ENCODE measurements at regions of chr6 and their contacts with region 1.

Region 1: DNA sequence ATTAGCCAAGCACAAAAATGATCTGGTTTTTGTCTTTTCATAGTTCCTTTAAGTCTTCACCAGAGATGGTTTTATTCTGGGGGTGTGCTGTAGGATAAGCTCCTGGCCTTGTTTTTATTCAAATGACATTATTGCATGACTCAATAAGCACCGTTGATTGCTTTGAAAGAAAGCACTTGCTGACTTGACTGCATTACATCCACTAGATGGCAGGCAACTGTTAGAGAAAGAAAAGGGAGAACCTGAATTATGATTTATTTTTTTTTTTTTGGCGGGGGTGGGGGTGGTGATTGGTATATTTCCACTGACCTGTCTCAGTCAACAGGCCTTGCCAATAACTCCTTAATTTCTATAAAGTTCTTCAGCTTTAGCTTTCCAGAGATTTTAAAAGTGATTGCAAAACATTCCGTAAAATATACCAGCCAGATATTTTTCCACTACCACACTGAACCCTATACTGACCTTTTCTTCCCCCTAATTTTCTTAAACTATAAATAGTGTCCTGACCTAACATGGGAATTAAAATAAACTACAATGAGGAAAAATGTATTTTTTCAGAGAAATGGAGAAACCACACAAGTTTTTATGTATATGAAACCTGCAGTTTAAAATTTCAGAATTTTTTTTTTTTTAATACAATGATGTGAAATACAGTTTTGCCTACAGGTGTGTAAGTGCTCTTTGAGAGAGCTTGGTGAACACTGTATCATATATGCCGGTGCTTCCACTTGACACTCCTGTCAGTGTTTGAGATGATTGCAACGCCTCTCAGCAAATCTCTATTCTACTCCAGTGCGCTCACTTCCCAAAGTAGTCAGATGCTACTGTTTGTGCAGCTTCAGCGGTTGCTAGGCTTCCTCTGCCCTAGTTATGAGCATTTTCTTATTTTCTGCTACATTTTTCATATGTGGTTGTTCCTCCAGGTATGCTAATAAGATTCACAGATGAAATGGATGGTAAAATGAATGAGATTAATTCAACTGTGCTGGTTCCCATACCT is 274.3 kb downstream of the CD109 start:
- DNase-seq: peak in 1 of 2 donors; percentile 28
- ATAC-seq: peak in 5 of 8 donors; percentile 35 to 53 (median 37)
- H3K4me3 ChIP-seq: no peak overlapping the region
- H3K27ac ChIP-seq: no peak overlapping the region
- H3K4me1 ChIP-seq: peaks cover 0 to 21% (median 0%) of the 10 kb centered on the region in 9 donors
- H3K27me3 ChIP-seq: no peaks in the 10 kb centered on the region
- CTCF ChIP-seq: peak in 8 of 9 donors; percentile 35 to 68 (median 56)

Region 2: DNA sequence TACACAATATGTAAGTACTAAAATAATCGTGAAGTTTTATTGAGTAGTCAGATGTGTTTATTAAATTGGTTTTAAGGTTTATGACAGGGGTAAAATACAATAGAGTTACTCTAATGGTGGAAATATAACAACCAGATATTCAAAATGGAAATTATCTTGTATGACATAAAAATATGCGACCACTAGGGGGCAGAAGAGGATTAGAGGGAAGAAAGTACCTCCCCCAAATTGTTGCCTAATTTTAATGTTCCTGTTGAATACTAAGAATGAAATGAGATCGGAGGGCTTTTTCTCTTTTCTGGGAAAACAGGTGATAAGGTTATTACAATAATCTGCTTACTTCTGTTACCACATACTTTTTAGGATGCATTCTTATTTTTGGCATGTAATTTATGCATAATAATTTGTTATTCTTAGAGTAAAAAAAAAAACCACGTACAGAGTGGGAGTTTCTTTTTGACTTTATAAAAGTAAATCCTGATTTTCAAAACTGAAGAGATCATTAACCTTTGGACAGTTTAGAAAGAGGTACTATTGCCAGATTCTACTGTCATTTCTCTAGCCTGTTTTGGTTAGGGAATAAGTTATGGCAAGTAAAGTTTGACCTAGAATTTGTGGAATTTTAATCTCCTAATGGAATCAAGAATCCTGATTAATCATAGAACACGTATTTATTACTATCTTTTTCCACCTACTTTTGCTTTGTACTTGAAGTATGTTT is 115.1 kb before region 1 on chr6:
- intact Hi-C with region 1: loop called in 2 of 10 experiments (anchors 10 kb)
- DNase-seq: peak in 1 of 2 donors; percentile 42
- ATAC-seq: peak in 4 of 8 donors; percentile 23 to 64 (median 36)
- H3K4me3 ChIP-seq: no peak overlapping the region
- H3K27ac ChIP-seq: peak overlapping the region in 5 of 10 donors; percentile 8 to 54 (median 45)
- H3K4me1 ChIP-seq: peaks cover 0 to 4% (median 0%) of the 10 kb centered on the region in 9 donors
- H3K27me3 ChIP-seq: no peaks in the 10 kb centered on the region
- CTCF ChIP-seq: peak; percentile 57 to 77 (median 75)

Region 3: GRCh38 chr6:73898624-73899023 is 71.6 kb before region 1 on chr6:
- intact Hi-C with region 1: no loop called
- DNase-seq: no peak
- ATAC-seq: no peak
- H3K4me3 ChIP-seq: no peak overlapping the region
- H3K27ac ChIP-seq: no peak overlapping the region
- H3K4me1 ChIP-seq: no peaks in the 10 kb centered on the region
- H3K27me3 ChIP-seq: no peaks in the 10 kb centered on the region
- CTCF ChIP-seq: no peak

Region 4: GRCh38 chr6:74598473-74599393 is 628.5 kb after region 1 on chr6:
- intact Hi-C with region 1: no loop called
- DNase-seq: no peak
- ATAC-seq: no peak
- H3K4me3 ChIP-seq: no peak overlapping the region
- H3K27ac ChIP-seq: no peak overlapping the region
- H3K4me1 ChIP-seq: no peaks in the 10 kb centered on the region
- H3K27me3 ChIP-seq: no peaks in the 10 kb centered on the region
- CTCF ChIP-seq: no peak